PC-9 (cell line): ENCODE measurements at regions of chr3 and their contacts with region 1.

Region 1: DNA sequence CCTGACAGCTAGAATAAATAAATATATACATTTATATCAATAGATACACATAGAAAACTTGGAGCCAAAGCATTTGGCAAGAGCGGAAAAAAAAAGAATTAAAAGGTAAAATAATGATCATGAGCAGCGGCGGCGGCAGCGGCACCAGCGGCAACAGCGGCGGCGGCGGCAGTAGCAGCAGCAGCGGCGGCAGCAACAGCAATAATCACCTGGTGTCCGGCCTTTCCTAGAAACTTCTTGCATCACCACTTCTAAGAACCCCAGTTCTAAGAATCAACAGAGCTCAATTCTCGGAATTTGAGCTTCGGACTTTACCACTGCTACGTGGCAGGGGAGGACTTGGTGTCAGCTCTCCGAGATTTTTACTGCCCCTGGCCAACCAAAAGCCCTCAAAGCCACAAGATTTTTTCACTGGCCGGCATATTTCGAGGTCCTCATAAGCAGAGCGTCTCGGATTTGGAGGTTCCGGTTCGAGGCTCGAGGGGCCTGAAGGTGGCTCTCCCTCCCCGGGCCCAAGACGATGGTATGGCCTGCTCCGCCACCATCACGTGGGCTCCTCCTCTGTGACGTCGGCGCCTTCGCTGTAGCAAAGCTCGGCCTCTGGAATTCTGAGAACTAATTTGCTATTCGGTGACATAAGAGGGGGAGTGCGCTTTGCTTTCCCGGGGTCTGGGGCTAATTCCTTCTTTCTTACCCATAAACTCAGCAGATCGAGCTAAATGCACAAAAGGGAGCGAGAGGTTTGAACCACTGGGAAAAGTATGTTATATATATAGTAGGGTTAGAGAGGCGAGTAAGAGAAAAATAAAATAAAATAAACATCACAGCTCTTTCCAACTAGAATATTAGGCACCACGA is at the start of gene BCL6:
- DNase-seq: peak; percentile 92 to 99
- H3K4me3 ChIP-seq: peak within 1 kb of the TSS; percentile 88
- H3K27ac ChIP-seq: peak within 1 kb of the TSS; percentile 94
- H3K4me1 ChIP-seq: peaks cover 48% of the 10 kb centered on the region
- H3K27me3 ChIP-seq: no peaks in the 10 kb centered on the region
- CTCF ChIP-seq: 0 out of 2 replicates have a peak, but pooled peaks have one; percentile 19
- total RNA-seq, gene BCL6: 37.1 and 42.2 TPM in 2 replicates

Region 2: GRCh38 chr3:187777331-187777941 is 32.0 kb after region 1 on chr3:
- CTCF ChIA-PET with region 1: no interaction called
- POLR2A ChIA-PET with region 1: no interaction called
- intact Hi-C with region 1: loop called (anchors 1 kb)
- DNase-seq: peak; percentile 35 to 96
- H3K4me3 ChIP-seq: peak overlapping the region; percentile 12; the same call in 1 of the 2 replicates
- H3K27ac ChIP-seq: peak overlapping the region; percentile 72
- H3K4me1 ChIP-seq: peaks cover 26% of the 10 kb centered on the region
- H3K27me3 ChIP-seq: no peaks in the 10 kb centered on the region
- CTCF ChIP-seq: no peak

Region 3: GRCh38 chr3:187795207-187795960 is 50.0 kb after region 1 on chr3:
- CTCF ChIA-PET with region 1: no interaction called
- POLR2A ChIA-PET with region 1: no interaction called
- intact Hi-C with region 1: no loop called
- DNase-seq: no peak
- H3K4me3 ChIP-seq: no peak overlapping the region
- H3K27ac ChIP-seq: no peak overlapping the region
- H3K4me1 ChIP-seq: peaks cover 5% of the 10 kb centered on the region; the same call in 1 of the 2 replicates
- H3K27me3 ChIP-seq: no peaks in the 10 kb centered on the region
- CTCF ChIP-seq: no peak

Region 4: GRCh38 chr3:187913617-187914291 is 168.3 kb after region 1 on chr3:
- CTCF ChIA-PET with region 1: interaction called, 4 read pairs
- POLR2A ChIA-PET with region 1: interaction called, 14 read pairs
- intact Hi-C with region 1: loop called (anchors 1 kb)
- DNase-seq: peak; percentile 64 to 100
- H3K4me3 ChIP-seq: peak overlapping the region; percentile 15; the same call in 1 of the 2 replicates
- H3K27ac ChIP-seq: peak overlapping the region; percentile 94
- H3K4me1 ChIP-seq: peaks cover 85% of the 10 kb centered on the region
- H3K27me3 ChIP-seq: no peaks in the 10 kb centered on the region
- CTCF ChIP-seq: no peak

Region 5: DNA sequence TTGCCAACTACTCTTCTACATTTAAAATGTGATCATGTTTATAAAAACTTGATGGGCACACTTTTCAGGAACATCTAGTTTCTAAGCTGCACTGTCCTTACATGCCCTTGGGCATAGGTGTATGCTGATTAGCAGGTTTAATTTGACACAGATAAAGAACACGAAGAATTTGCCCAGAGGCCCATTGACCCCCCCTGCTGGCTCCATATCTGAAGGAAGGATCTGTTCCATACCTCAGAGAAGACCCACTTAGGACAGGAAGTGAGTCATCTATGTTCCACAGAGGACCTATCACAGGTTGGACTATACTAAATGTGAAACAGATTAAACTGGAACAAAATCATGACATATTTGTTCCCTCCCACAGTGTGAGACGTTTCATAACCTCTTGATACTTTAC is 315.7 kb after region 1 on chr3:
- CTCF ChIA-PET with region 1: interaction called, 4 read pairs
- POLR2A ChIA-PET with region 1: interaction called, 7 read pairs
- intact Hi-C with region 1: loop called (anchors 1 kb)
- DNase-seq: peak; percentile 92 to 99
- H3K4me3 ChIP-seq: no peak overlapping the region
- H3K27ac ChIP-seq: peak overlapping the region; percentile 46
- H3K4me1 ChIP-seq: peaks cover 36% of the 10 kb centered on the region
- H3K27me3 ChIP-seq: no peaks in the 10 kb centered on the region
- CTCF ChIP-seq: no peak

Region 6: GRCh38 chr3:188270423-188270972 is 525.1 kb after region 1 on chr3:
- CTCF ChIA-PET with region 1: no interaction called
- POLR2A ChIA-PET with region 1: no interaction called
- intact Hi-C with region 1: loop called (anchors 1 kb)
- DNase-seq: peak; percentile 80 to 87
- H3K4me3 ChIP-seq: no peak overlapping the region
- H3K27ac ChIP-seq: no peak overlapping the region
- H3K4me1 ChIP-seq: peaks cover 43% of the 10 kb centered on the region
- H3K27me3 ChIP-seq: no peaks in the 10 kb centered on the region
- CTCF ChIP-seq: no peak

Region 7: DNA sequence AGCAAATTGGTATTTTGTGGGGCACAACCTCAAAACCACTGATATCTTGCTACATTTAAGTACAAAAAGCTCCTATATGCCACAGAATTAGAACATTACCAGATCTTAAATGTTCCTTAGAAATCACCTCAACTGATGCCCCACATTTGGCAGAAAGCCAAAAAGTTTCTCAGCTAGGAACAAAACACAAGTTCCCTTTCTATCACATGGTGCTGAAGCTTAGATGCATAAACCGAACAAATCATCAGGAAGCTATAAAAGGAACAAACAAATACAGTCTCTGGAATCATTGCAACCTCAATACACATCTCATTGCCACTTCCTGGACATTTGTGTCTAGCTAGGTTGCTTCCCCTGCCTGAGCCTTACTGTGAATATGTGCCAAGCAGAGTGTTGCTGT is 901.2 kb after region 1 on chr3:
- CTCF ChIA-PET with region 1: no interaction called
- POLR2A ChIA-PET with region 1: interaction called, 10 read pairs
- intact Hi-C with region 1: no loop called
- DNase-seq: no peak
- H3K4me3 ChIP-seq: no peak overlapping the region
- H3K27ac ChIP-seq: no peak overlapping the region
- H3K4me1 ChIP-seq: no peaks in the 10 kb centered on the region
- H3K27me3 ChIP-seq: no peaks in the 10 kb centered on the region
- CTCF ChIP-seq: no peak